ENCODE measurements at regions of chr14 and their contacts with region 1.

Region 1: DNA sequence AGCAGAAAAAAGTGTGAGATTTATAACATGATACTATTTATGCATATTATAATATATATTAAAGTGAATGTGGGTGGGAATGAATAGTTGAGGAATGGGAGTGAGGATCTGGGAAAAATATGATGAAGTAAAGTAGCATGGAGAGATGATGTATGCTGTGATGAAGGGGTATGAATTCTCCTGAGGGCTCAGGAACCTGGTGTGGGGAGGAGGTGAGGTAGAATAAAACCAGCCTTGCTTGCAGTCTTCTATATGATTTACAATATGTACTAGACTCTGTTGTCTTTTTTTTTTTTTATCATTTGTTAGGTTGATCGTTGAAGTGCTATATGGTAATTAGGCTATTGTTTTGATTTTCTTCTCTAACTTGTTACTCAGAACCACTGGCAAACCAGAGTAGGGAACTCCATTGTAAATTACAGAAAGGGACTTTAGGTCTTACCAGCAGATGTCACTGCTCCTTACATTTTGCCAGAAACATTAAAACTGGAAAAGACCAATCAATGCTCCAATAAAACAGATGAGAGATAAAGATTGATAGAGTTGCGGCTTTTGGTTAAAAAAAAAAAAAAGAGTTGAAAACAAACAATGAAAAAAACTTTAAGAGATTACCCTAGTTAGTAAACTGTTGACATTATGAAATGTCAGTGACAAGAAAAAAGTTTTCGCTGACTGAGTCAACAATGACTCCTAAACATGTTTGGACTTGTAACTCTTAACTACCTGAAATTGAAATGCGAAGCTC is 39.9 kb downstream of the ATL1 start:
- DNase-seq: no peak
- H3K4me3 ChIP-seq: no peak overlapping the region
- H3K27ac ChIP-seq: no peak overlapping the region
- H3K4me1 ChIP-seq: peaks cover 5% of the 10 kb centered on the region
- H3K27me3 ChIP-seq: no peaks in the 10 kb centered on the region
- CTCF ChIP-seq: peak; percentile 70

Region 2: GRCh38 chr14:50773632-50774541 is 174.0 kb after region 1 on chr14:
- intact Hi-C with region 1: loop called (anchors 10 kb)
- DNase-seq: no peak
- H3K4me3 ChIP-seq: no peak overlapping the region
- H3K27ac ChIP-seq: peak overlapping the region; percentile 59
- H3K4me1 ChIP-seq: peaks cover 43% of the 10 kb centered on the region
- H3K27me3 ChIP-seq: no peaks in the 10 kb centered on the region
- CTCF ChIP-seq: peak; percentile 76

Measured in left ventricle myocardium inferior (tissue), 1 donor.